ENCODE measurements at regions of chr16 and their contacts with region 1.

Region 1: DNA sequence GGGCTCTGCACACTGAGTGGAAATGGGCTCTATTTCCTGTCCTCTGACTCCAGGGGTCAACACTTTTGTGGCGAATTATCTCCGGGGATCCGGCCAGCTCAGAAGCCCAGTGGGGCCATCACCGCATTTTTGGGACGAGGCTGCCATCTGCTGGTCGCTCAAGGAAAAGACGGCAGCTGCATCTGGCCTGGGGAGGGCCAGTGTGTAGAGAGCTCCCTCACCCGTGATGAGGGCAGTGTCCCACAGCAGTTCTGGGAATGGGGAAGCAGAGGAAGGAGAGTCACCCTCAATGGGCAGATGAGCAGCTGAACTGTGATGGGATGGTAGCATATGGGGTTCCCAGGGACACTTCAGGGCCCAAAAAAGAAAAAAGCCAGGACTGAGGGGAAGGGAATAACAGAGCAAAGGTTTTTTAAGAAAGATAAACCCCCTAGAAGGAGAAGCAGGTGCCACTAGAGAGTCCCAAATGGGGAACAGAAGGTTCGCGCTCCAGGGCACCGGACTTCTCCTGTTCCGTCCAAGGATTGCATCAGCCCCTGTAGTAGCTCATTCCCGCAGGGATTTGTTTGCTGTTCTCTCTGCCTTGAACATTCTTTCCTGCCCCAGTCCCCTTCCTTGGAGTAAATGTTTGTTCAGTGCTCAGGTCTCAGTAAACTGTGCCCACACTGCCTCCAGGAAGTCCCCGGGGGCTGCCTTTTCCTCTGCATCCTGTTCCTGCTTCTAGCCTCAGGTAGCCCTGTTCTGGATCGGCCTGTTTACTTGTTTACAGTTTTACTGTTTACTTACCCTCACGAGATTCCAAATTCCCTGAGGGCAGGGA is 9.3 kb upstream of the ABCC12 start:
- DNase-seq: peak; percentile 92
- H3K4me3 ChIP-seq: no peak overlapping the region
- H3K27ac ChIP-seq: peak overlapping the region in 4 of 8 donors; percentile 2 to 89 (median 65)
- H3K4me1 ChIP-seq: peaks cover 0 to 39% (median 11%) of the 10 kb centered on the region in 6 donors
- H3K27me3 ChIP-seq: no peaks in the 10 kb centered on the region
- CTCF ChIP-seq: peak; percentile 78 to 96 (median 89)
- POLR2A ChIP-seq: no peak

Region 2: DNA sequence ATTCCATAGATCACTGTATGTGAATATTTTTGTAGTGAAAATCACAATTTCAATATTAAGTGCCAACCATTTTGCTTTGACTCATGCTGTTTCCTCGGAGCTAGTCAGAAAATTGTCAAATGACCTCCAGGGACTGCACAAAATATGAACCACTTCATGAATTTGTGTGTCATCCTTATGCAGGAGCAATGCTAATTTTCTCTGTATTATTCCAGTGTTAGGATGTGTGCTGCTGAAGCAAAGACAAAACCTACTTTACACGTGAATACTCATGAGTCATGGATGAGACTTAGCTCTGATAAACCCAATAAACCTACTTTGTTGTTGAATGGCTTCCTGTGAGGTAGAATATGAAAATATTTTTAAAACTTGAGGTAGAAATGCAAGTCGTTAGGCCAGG is 1609.2 kb before region 1 on chr16:
- intact Hi-C with region 1: loop called (anchors 10 kb)
- DNase-seq: no peak
- H3K4me3 ChIP-seq: no peak overlapping the region
- H3K27ac ChIP-seq: no peak overlapping the region
- H3K4me1 ChIP-seq: peaks cover 0 to 5% (median 2%) of the 10 kb centered on the region in 6 donors
- H3K27me3 ChIP-seq: peaks cover 0 to 7% (median 0%) of the 10 kb centered on the region in 7 donors
- CTCF ChIP-seq: no peak
- POLR2A ChIP-seq: no peak

Region 3: GRCh38 chr16:48623304-48624016 is 458.3 kb after region 1 on chr16:
- intact Hi-C with region 1: loop called (anchors 10 kb)
- DNase-seq: peak; percentile 96
- H3K4me3 ChIP-seq: peak overlapping the region; percentile 16 to 69 (median 46)
- H3K27ac ChIP-seq: peak overlapping the region; percentile 60 to 94 (median 86)
- H3K4me1 ChIP-seq: peaks cover 8 to 51% (median 29%) of the 10 kb centered on the region in 6 donors
- H3K27me3 ChIP-seq: no peaks in the 10 kb centered on the region
- CTCF ChIP-seq: peak; percentile 98 to 100 (median 99)
- POLR2A ChIP-seq: no peak